Colonic mucosa (tissue), 4 donors: ENCODE measurements at regions of chr20 and their contacts with region 1.

Region 1: GRCh38 chr20:3218307-3218988 is 9.2 kb downstream of the ITPA start:
- DNase-seq: peak; percentile 62
- H3K4me3 ChIP-seq: no peak overlapping the region
- H3K27ac ChIP-seq: no peak overlapping the region
- H3K4me1 ChIP-seq: peaks cover 5% of the 10 kb centered on the region
- H3K27me3 ChIP-seq: no peaks in the 10 kb centered on the region
- CTCF ChIP-seq: peak; percentile 91

Region 2: DNA sequence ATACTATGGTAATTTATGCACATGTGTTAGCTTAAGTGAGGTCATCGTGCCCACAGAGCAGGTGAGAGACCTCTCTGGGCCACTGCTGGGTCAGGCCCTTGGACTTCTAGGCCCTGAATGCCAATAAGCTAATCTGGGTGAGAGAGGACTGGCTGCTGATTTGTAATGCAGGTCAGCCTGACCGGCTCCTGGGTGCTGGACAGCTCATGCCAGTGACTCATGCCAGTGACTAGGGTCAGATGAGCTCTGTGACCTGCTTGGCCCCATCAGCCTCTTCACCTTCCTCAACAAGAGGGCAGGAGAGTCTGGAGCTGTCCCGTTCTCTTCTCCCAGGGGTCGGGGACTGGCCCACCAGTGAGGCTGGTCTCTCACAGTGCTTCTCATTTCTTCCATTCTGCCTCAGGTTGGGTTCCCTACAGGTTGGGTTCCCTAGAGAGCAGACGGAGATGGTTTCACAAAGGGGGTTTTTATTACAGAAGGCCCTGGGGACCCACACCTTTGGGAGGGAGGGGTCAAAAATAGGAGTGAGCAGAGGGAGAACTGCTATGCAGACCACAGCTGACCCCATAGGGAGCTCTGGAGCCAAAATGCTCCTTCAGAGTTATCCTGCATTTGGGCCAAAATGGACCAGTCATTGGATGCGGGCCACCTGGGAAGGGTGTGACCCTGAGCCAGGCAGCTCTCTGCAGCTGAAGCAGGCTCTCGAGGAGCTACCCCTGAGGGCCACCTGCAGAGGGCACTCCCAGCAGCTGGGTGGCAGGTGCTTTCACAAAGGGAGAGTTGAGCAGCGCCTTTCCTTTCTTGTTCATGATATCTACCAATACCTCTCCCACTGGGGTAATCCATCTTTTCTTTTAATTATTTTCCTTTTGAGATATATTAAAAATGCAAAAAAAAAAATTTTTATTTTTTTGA is 149.2 kb before region 1 on chr20:
- intact Hi-C with region 1: no loop called
- DNase-seq: no peak
- H3K4me3 ChIP-seq: no peak overlapping the region
- H3K27ac ChIP-seq: no peak overlapping the region
- H3K4me1 ChIP-seq: peaks cover 12% of the 10 kb centered on the region
- H3K27me3 ChIP-seq: peaks cover 8% of the 10 kb centered on the region
- CTCF ChIP-seq: no peak

Region 3: DNA sequence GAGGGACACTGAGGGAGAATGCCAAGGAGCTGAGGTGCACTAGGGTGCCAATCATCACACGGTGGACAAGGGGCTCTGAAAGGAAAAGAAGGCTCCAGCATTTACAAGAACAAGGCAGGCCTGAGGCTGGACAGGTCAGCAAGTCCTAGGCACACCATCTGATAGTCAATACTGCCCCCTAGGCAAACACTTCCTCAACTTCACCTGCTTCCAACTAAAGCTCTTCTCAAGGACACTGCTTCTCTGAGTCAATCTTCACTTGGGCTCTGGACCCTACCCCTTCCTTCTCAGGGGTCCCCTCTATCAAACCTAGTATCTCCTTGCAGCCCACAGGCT is 58.2 kb after region 1 on chr20:
- intact Hi-C with region 1: loop called (anchors 2 kb)
- DNase-seq: peak; percentile 27
- H3K4me3 ChIP-seq: no peak overlapping the region
- H3K27ac ChIP-seq: no peak overlapping the region
- H3K4me1 ChIP-seq: no peaks in the 10 kb centered on the region
- H3K27me3 ChIP-seq: no peaks in the 10 kb centered on the region
- CTCF ChIP-seq: peak; percentile 23

Region 4: DNA sequence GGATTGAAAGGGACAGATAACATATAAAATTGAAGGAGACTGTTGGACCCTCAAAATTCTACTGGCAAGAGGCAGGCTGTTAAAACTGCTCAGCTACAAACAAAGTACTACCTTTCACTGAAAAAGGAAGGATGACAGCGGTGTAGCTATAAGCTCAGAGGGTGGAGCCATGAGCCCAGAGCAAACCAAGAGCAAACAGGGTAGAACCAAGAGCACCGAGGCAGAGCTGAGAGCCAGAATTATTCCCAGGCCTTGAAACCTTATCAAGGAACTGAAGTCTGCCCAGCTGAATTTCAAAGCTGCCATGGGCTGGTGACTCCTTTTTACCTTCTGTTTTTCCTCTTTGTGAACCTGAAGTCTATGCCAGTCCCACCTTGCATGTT is 95.2 kb after region 1 on chr20:
- intact Hi-C with region 1: loop called (anchors 2 kb)
- DNase-seq: no peak
- H3K4me3 ChIP-seq: no peak overlapping the region
- H3K27ac ChIP-seq: no peak overlapping the region
- H3K4me1 ChIP-seq: no peaks in the 10 kb centered on the region
- H3K27me3 ChIP-seq: no peaks in the 10 kb centered on the region
- CTCF ChIP-seq: no peak

Region 5: GRCh38 chr20:3446779-3447178 is 228.3 kb after region 1 on chr20:
- intact Hi-C with region 1: no loop called
- DNase-seq: no peak
- H3K4me3 ChIP-seq: no peak overlapping the region
- H3K27ac ChIP-seq: no peak overlapping the region
- H3K4me1 ChIP-seq: no peaks in the 10 kb centered on the region
- H3K27me3 ChIP-seq: peaks cover 3% of the 10 kb centered on the region
- CTCF ChIP-seq: no peak